ENCODE measurements at regions of chr10 and their contacts with region 1.

Region 1: DNA sequence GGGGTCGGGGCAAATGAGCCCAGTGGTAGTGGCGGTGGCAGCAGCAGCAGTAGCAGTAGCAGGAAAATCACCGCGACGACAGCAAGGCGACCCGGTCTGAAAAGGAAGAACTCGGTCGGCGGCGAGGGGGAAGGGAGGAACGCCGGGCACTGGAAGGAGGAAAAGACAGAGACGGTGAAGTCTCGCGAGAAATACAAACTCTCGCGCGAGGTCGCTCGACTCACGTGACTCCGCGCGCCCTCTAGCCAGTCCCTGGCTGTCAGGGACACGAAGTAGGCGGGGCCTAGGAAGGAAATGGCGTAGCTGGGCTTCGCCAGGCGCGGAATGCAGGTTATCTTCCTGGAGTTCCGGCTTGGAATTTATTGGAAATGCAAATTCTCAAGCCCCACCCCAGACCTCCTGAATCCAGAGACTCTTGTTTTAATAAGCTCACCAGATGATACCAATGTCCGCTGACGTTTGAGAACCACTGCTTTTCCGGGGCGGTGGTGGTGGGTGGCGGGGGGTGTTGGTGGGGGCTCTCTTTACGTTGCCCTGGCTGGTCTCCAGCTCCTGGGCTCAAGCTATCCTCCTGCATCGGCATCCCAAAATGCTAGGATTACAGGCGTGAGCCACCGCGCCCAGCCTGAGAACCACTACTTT is at the start of gene SMNDC1:
- DNase-seq: peak; percentile 96 to 97 (median 96)
- H3K4me3 ChIP-seq: peak within 1 kb of the TSS; percentile 62 to 70
- H3K4me3 Mint-ChIP-seq: peak within 1 kb of the TSS; percentile 96 to 98 (median 98)
- H3K27ac ChIP-seq: peak within 1 kb of the TSS; percentile 81
- H3K27ac Mint-ChIP-seq: peak within 1 kb of the TSS; percentile 95 to 100 (median 99)
- H3K4me1 ChIP-seq: peaks cover 52% of the 10 kb centered on the region
- H3K4me1 Mint-ChIP-seq: peaks cover 27 to 58% (median 45%) of the 10 kb centered on the region in 4 donors
- H3K27me3 ChIP-seq: no peaks in the 10 kb centered on the region
- H3K27me3 Mint-ChIP-seq: no peaks in the 10 kb centered on the region
- total RNA-seq, gene SMNDC1: 39.0 to 39.3 TPM

Region 2: DNA sequence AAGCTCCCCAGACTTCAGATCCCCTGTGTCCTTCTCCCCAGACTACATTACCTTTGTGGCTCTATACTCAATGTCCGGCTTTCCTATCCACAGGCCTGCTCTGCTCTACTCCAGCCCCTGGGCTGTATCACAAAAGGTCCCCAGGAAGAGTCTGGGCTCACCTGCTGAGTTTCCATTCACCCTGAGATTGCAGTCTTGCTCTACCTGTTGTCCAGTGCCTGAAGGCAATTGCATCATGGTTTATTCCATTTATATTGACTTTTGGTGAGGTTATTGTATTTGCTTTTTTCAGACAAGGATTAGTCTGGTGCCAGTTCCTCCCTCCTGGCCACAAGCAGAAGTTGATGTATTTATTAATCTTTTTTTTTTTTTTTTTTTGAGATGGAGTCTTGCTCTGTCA is 654.7 kb before region 1 on chr10:
- CTCF ChIA-PET with region 1: no interaction called
- POLR2A ChIA-PET with region 1: no interaction called
- intact Hi-C with region 1: no loop called
- DNase-seq: no peak
- H3K4me3 ChIP-seq: no peak overlapping the region
- H3K4me3 Mint-ChIP-seq: no peak overlapping the region
- H3K27ac ChIP-seq: no peak overlapping the region
- H3K27ac Mint-ChIP-seq: no peak overlapping the region
- H3K4me1 ChIP-seq: no peaks in the 10 kb centered on the region
- H3K4me1 Mint-ChIP-seq: no peaks in the 10 kb centered on the region
- H3K27me3 ChIP-seq: no peaks in the 10 kb centered on the region
- H3K27me3 Mint-ChIP-seq: peaks cover 0 to 4% of the 10 kb centered on the region in 2 donors

Region 3: DNA sequence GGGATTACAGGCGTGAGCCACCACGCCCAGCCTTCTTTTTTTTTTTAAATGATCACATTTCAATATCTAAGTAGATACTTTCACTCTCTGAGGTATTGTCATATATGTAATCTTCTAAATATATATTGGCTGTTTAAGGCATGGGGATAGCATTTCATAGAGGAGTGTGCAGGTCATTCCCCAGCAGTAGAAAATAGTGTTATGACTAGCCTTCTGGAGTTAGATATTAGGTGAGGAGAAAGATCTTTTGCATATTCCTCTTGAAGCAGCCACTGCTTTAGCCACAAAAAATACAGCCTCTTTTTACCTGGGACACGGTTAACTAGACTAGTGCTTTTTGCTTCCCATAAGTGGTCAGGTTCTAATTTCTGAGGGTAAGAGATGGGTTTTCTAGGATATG is 268.3 kb before region 1 on chr10:
- CTCF ChIA-PET with region 1: no interaction called
- POLR2A ChIA-PET with region 1: no interaction called
- intact Hi-C with region 1: no loop called
- DNase-seq: no peak
- H3K4me3 ChIP-seq: no peak overlapping the region
- H3K4me3 Mint-ChIP-seq: peak overlapping the region in 2 of 8 donors; percentile 33 to 37
- H3K27ac ChIP-seq: no peak overlapping the region
- H3K27ac Mint-ChIP-seq: peak overlapping the region in 3 of 7 donors; percentile 8 to 51 (median 46)
- H3K4me1 ChIP-seq: peaks cover 91% of the 10 kb centered on the region
- H3K4me1 Mint-ChIP-seq: peaks cover 57 to 93% (median 75%) of the 10 kb centered on the region in 4 donors
- H3K27me3 ChIP-seq: no peaks in the 10 kb centered on the region
- H3K27me3 Mint-ChIP-seq: no peaks in the 10 kb centered on the region

Region 4: GRCh38 chr10:110285501-110285900 is 19.4 kb before region 1 on chr10:
- CTCF ChIA-PET with region 1: interaction called, 10 read pairs
- POLR2A ChIA-PET with region 1: interaction called, 3 read pairs
- intact Hi-C with region 1: no loop called
- DNase-seq: no peak
- H3K4me3 ChIP-seq: no peak overlapping the region
- H3K4me3 Mint-ChIP-seq: no peak overlapping the region
- H3K27ac ChIP-seq: no peak overlapping the region
- H3K27ac Mint-ChIP-seq: no peak overlapping the region
- H3K4me1 ChIP-seq: no peaks in the 10 kb centered on the region
- H3K4me1 Mint-ChIP-seq: peaks cover 1 to 13% (median 4%) of the 10 kb centered on the region in 4 donors
- H3K27me3 ChIP-seq: no peaks in the 10 kb centered on the region
- H3K27me3 Mint-ChIP-seq: no peaks in the 10 kb centered on the region

Region 5: GRCh38 chr10:110497438-110498086 is 192.7 kb after region 1 on chr10 and contains the start of gene DUSP5:
- CTCF ChIA-PET with region 1: interaction called, 40 read pairs
- POLR2A ChIA-PET with region 1: interaction called, 49 read pairs
- intact Hi-C with region 1: loop called (anchors 1 kb)
- DNase-seq: peak; percentile 93 to 98 (median 96)
- H3K4me3 ChIP-seq: peak within 1 kb of the TSS; percentile 76 to 83
- H3K4me3 Mint-ChIP-seq: peak within 1 kb of the TSS; percentile 93 to 98 (median 96)
- H3K27ac ChIP-seq: peak within 1 kb of the TSS; percentile 79
- H3K27ac Mint-ChIP-seq: peak within 1 kb of the TSS; percentile 91 to 98 (median 96)
- H3K4me1 ChIP-seq: peaks cover 52% of the 10 kb centered on the region
- H3K4me1 Mint-ChIP-seq: peaks cover 45 to 68% (median 55%) of the 10 kb centered on the region in 4 donors
- H3K27me3 ChIP-seq: no peaks in the 10 kb centered on the region
- H3K27me3 Mint-ChIP-seq: no peaks in the 10 kb centered on the region
- total RNA-seq, gene DUSP5: 3.5 to 3.8 TPM

Region 6: GRCh38 chr10:110567201-110568054 is 262.5 kb after region 1 on chr10 and contains the start of gene SMC3:
- CTCF ChIA-PET with region 1: interaction called, 5 read pairs
- POLR2A ChIA-PET with region 1: interaction called, 30 read pairs
- intact Hi-C with region 1: loop called (anchors 1 kb)
- DNase-seq: peak; percentile 91 to 96 (median 93)
- H3K4me3 ChIP-seq: peak within 1 kb of the TSS; percentile 72 to 93
- H3K4me3 Mint-ChIP-seq: peak within 1 kb of the TSS; percentile 91 to 97 (median 96)
- H3K27ac ChIP-seq: peak within 1 kb of the TSS; percentile 90
- H3K27ac Mint-ChIP-seq: peak within 1 kb of the TSS; percentile 95 to 99 (median 98)
- H3K4me1 ChIP-seq: peaks cover 45% of the 10 kb centered on the region
- H3K4me1 Mint-ChIP-seq: peaks cover 26 to 51% (median 36%) of the 10 kb centered on the region in 4 donors
- H3K27me3 ChIP-seq: no peaks in the 10 kb centered on the region
- H3K27me3 Mint-ChIP-seq: peaks cover 1 to 12% of the 10 kb centered on the region in 2 donors
- total RNA-seq, gene SMC3: 53.4 to 59.5 TPM

Region 7: DNA sequence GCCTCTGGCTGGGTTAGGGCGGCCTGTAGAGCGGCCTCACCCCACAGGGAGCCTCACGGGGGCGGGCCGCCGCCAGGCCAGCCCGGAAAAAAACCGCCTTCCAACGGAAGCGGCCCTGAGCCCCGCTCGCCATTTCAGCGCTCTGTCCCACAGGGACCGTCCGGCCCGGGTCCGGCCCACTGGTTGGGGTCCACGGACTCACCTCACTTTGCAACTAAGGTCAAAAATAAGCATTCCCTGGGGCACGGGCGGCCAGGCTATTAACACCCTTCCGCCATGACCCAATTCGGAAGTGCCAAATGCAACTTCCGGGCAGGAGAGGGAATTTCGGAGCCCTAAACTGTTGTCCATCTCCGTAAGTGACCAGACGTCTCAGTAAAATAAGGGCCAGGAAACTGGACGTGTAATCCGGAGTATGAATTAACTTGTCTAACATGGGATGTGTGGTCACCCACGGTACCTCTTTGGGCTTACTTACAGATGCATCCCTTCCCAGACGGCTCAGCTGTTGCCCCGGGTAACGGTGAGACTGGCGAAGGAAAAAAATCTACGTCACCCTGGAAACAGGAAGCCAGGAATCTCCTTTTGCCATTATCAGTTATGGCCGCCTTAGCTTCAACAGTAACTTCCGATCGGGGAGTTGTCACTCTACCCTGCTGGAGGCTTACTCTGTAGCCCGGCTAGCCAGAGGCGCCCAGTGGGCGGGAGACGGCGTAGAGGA is 613.9 kb after region 1 on chr10 and contains the start of gene BBIP1:
- CTCF ChIA-PET with region 1: no interaction called
- POLR2A ChIA-PET with region 1: interaction called, 8 read pairs
- intact Hi-C with region 1: loop called (anchors 2 kb)
- DNase-seq: peak in 1 of 5 donors; percentile 96
- H3K4me3 ChIP-seq: peak within 1 kb of the TSS; percentile 85 to 99
- H3K4me3 Mint-ChIP-seq: peak within 1 kb of the TSS; percentile 92 to 99 (median 98)
- H3K27ac ChIP-seq: peak within 1 kb of the TSS; percentile 99
- H3K27ac Mint-ChIP-seq: peak within 1 kb of the TSS; percentile 98 to 100 (median 100)
- H3K4me1 ChIP-seq: peaks cover 43% of the 10 kb centered on the region
- H3K4me1 Mint-ChIP-seq: peaks cover 27 to 64% (median 35%) of the 10 kb centered on the region in 4 donors
- H3K27me3 ChIP-seq: no peaks in the 10 kb centered on the region
- H3K27me3 Mint-ChIP-seq: no peaks in the 10 kb centered on the region
- total RNA-seq, gene BBIP1: 42.9 to 46.8 TPM

Measured in CD4-positive, alpha-beta memory T cell (primary cell).